GM13976 (cell line): ENCODE measurements at regions of chr2 and their contacts with region 1.

Region 1: GRCh38 chr2:135913727-135914365 is 37.6 kb upstream of the MCM6 start:
- DNase-seq: peak; percentile 32
- CTCF ChIP-seq: peak; percentile 55

Region 2: GRCh38 chr2:136131961-136132824 is 218.3 kb after region 1 on chr2:
- in situ Hi-C with region 1: loop called (anchors 5 kb)
- DNase-seq: peak; percentile 78
- CTCF ChIP-seq: no peak

Region 3: GRCh38 chr2:136238286-136239078 is 324.6 kb after region 1 on chr2:
- in situ Hi-C with region 1: no loop called
- DNase-seq: peak; percentile 60
- CTCF ChIP-seq: no peak